ENCODE measurements at regions of chr11 and their contacts with region 1.

Region 1: DNA sequence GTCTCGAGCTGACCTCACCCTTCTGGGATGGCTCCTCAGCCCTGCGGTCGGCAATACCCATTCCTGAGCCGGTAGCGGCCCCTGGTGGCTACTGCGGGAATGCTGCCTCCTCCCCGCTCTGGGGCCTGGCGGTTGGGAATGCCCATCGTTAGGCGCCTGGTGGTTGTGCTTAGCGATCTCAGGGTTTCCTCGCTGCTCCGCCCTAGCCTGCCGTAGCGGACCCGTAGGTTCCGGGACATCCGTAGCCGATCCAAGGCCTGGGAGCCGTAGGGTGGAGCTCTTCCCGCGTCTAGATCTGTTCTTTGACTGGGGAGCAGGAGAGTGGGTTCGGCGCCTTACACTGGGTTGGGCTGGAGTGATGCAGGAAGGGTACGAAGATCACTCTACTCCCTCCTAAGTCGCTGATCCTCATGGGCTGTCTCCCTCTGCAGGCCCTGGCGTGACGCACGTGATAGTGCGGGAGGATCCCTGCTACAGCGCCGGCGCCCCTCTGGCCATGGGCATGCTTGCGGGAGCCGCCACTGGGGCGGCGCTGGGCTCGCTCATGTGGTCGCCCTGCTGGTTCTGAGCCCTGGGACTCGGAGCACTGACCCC is 14.8 kb downstream of the PLEKHB1 start:
- DNase-seq: peak; percentile 77
- ATAC-seq: peak; percentile 98
- H3K4me3 ChIP-seq: peak overlapping the region; percentile 25
- H3K27ac ChIP-seq: peak overlapping the region; percentile 12; the same call in 1 of the 2 replicates
- H3K4me1 ChIP-seq: peaks cover 3% of the 10 kb centered on the region; the same call in 1 of the 2 replicates
- H3K27me3 ChIP-seq: no peaks in the 10 kb centered on the region
- CTCF ChIP-seq: peak; percentile 99
- POLR2A ChIP-seq: peak; percentile 62
- RAD21 ChIP-seq: peak; percentile 100

Region 2: GRCh38 chr11:73350908-73351636 is 310.1 kb before region 1 on chr11:
- CTCF ChIA-PET with region 1: interaction called, 3 read pairs
- POLR2A ChIA-PET with region 1: no interaction called
- dilution Hi-C with region 1: no loop called
- in situ Hi-C with region 1: no loop called
- intact Hi-C with region 1: loop called (anchors 1 kb)
- DNase-seq: peak; percentile 84
- ATAC-seq: peak; percentile 94
- H3K4me3 ChIP-seq: no peak overlapping the region
- H3K27ac ChIP-seq: peak overlapping the region; percentile 63; the same call in 1 of the 2 replicates
- H3K4me1 ChIP-seq: peaks cover 8% of the 10 kb centered on the region; the same call in 1 of the 2 replicates
- H3K27me3 ChIP-seq: no peaks in the 10 kb centered on the region
- CTCF ChIP-seq: peak; percentile 94
- POLR2A ChIP-seq: no peak
- RAD21 ChIP-seq: peak; percentile 74

Region 3: DNA sequence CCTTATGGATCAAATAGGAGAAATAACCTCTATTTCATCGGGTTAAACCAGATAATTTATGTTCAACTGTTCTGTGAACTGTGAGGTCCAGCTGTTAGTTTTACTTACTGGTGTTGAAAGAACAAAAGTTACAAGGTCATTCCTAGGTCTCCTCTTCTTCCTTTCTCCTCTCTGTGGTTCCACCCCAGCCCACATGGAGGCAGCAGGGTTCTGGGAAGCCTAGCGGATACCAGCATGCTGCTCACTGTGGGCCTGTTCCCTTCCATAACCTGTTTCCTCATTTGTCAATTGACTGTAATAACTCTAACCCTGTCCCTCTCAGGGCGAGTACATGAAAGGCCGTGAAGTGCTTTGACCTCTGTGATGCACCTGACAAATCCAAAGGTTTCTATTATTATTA is 257.1 kb before region 1 on chr11:
- CTCF ChIA-PET with region 1: interaction called, 7 read pairs
- POLR2A ChIA-PET with region 1: no interaction called
- dilution Hi-C with region 1: no loop called
- in situ Hi-C with region 1: loop called (anchors 5 kb)
- intact Hi-C with region 1: loop called (anchors 1 kb)
- DNase-seq: peak; percentile 40
- ATAC-seq: peak; percentile 74
- H3K4me3 ChIP-seq: no peak overlapping the region
- H3K27ac ChIP-seq: no peak overlapping the region
- H3K4me1 ChIP-seq: peaks cover 4% of the 10 kb centered on the region; the same call in 1 of the 2 replicates
- H3K27me3 ChIP-seq: no peaks in the 10 kb centered on the region
- CTCF ChIP-seq: peak; percentile 60
- POLR2A ChIP-seq: no peak
- RAD21 ChIP-seq: peak; percentile 76

Region 4: DNA sequence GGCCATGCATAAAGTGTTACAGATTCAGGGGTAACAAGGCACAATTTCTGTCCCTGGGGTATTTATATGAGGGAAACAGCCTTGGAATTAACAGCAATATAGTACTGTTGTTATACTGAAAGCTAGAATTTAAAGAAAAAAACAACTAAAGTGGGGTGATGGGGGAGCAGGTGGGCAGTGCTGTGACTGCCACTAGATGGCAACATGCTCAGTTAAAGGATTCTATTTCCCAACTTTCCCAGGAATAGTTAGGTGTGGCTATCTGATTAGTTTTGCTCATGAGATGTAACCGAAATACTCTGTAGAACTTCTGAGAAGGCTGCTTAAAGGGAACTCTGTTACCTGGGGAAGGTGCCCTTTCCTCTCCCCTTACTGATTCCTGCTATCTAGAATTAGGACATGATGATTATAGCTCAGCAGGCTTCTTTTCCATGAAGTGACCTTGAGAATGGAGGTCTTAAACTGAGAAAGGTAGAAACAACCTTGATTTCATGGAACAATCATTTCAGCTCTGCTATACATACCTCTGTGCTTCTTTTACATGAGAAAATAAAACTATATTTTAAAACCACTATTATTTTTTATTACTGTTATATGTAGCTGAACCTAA is 182.3 kb before region 1 on chr11:
- CTCF ChIA-PET with region 1: interaction called, 9 read pairs
- POLR2A ChIA-PET with region 1: no interaction called
- dilution Hi-C with region 1: no loop called
- in situ Hi-C with region 1: no loop called
- intact Hi-C with region 1: loop called (anchors 1 kb)
- DNase-seq: peak; percentile 42
- ATAC-seq: peak; percentile 89
- H3K4me3 ChIP-seq: no peak overlapping the region
- H3K27ac ChIP-seq: no peak overlapping the region
- H3K4me1 ChIP-seq: peaks cover 3% of the 10 kb centered on the region
- H3K27me3 ChIP-seq: no peaks in the 10 kb centered on the region
- CTCF ChIP-seq: peak; percentile 74
- POLR2A ChIP-seq: no peak
- RAD21 ChIP-seq: peak; percentile 68

Region 5: GRCh38 chr11:73521621-73522020 is 139.5 kb before region 1 on chr11:
- CTCF ChIA-PET with region 1: no interaction called
- POLR2A ChIA-PET with region 1: no interaction called
- dilution Hi-C with region 1: no loop called
- in situ Hi-C with region 1: no loop called
- intact Hi-C with region 1: no loop called
- DNase-seq: peak; percentile 54
- ATAC-seq: peak; percentile 46; the same call in 1 of the 2 replicates
- H3K4me3 ChIP-seq: no peak overlapping the region
- H3K27ac ChIP-seq: no peak overlapping the region
- H3K4me1 ChIP-seq: peaks cover 10% of the 10 kb centered on the region
- H3K27me3 ChIP-seq: no peaks in the 10 kb centered on the region
- CTCF ChIP-seq: no peak
- POLR2A ChIP-seq: no peak
- RAD21 ChIP-seq: no peak

Region 6: GRCh38 chr11:73597956-73598718 is 63.0 kb before region 1 on chr11 and contains the start of gene FAM168A:
- CTCF ChIA-PET with region 1: no interaction called
- POLR2A ChIA-PET with region 1: no interaction called
- dilution Hi-C with region 1: no loop called
- in situ Hi-C with region 1: no loop called
- intact Hi-C with region 1: loop called (anchors 1 kb)
- DNase-seq: peak; percentile 97
- ATAC-seq: peak; percentile 98
- H3K4me3 ChIP-seq: peak within 1 kb of the TSS; percentile 88
- H3K27ac ChIP-seq: peak within 1 kb of the TSS; percentile 96
- H3K4me1 ChIP-seq: peaks cover 6% of the 10 kb centered on the region; the same call in 1 of the 2 replicates
- H3K27me3 ChIP-seq: no peaks in the 10 kb centered on the region
- CTCF ChIP-seq: peak; percentile 16; the same call in 1 of the 2 replicates
- POLR2A ChIP-seq: no peak
- RAD21 ChIP-seq: peak; percentile 25; the same call in 1 of the 2 replicates
- total RNA-seq, gene FAM168A: 13.1 and 13.6 TPM in 2 replicates

Region 7: DNA sequence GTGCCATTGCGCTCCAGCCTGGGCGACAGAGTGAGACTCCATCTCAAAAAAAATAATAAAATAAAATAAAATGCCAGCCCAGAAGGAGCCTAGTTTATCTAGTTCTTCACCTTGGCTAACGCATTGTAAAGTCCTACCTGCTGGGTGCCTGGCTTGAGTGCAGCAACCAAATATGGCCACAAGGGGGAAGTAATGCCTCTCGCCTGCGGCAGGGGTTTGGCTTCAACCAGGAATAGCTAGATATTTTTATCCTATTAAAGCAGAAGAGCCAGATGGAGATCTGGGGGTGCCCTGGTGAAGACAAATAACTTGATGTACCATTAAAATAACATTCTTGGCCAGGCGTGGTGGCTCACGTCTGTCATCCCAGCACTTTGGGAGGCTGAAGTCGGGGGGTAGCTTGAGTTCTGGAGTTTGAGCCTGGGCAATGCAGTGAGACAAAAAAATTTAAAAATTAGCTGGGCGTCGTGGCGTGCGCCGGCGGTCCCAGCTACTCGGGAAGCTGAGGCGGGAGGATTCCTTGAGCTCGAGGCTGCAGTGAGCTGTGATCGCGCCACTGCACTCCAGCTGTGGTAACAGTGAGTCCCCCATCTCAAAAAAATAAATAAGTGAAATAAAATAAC is 35.3 kb before region 1 on chr11:
- CTCF ChIA-PET with region 1: interaction called, 31 read pairs
- POLR2A ChIA-PET with region 1: no interaction called
- dilution Hi-C with region 1: no loop called
- in situ Hi-C with region 1: loop called (anchors 5 kb)
- intact Hi-C with region 1: loop called (anchors 1 kb)
- DNase-seq: peak; percentile 59
- ATAC-seq: peak; percentile 99
- H3K4me3 ChIP-seq: peak overlapping the region; percentile 8; the same call in 1 of the 2 replicates
- H3K27ac ChIP-seq: no peak overlapping the region
- H3K4me1 ChIP-seq: no peaks in the 10 kb centered on the region
- H3K27me3 ChIP-seq: peaks cover 35% of the 10 kb centered on the region
- CTCF ChIP-seq: peak; percentile 86
- POLR2A ChIP-seq: no peak
- RAD21 ChIP-seq: peak; percentile 81

Region 8: DNA sequence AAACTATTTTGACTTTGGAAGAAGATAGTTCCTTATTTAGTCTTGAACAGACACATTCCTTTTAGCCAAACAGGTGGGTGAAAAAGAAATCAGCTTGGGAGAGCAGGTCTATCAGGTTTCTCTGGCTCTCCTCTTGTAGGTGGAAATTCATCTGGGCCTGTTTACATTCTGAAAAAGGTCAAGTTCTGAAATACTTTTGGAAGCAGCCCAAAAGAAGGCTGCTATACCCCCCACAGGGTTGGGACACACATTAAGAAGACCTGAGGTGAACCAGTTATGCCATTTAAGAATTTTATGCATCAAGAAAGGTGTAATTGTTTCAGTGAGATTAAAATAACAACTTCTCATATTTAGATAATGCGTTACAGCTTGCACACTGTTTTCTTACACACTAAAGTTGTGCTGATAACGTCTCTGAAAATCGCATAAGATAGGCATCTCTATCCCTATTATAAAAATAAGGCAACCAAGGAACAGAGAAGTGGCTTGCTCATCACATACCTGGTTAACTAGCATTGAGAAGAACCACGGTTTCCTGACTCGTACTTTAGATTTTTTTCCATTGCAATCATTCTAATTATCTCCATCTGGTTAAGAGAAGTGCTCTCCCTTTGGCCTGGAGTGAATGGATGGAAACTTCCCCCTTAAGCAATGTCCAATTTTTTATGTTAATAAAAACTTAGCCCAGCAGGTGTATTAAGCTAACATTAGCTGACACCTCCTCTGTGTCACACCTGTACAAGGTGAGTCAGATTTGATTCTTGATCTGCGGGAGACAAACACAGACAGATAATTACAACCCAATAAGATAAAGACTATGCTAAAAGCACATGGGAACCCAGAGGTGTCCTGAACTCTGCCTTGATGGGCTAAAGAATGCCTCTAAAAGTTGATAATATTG is 408.3 kb after region 1 on chr11:
- CTCF ChIA-PET with region 1: no interaction called
- POLR2A ChIA-PET with region 1: no interaction called
- dilution Hi-C with region 1: no loop called
- in situ Hi-C with region 1: no loop called
- intact Hi-C with region 1: no loop called
- DNase-seq: peak; percentile 41
- ATAC-seq: no peak
- H3K4me3 ChIP-seq: no peak overlapping the region
- H3K27ac ChIP-seq: no peak overlapping the region
- H3K4me1 ChIP-seq: no peaks in the 10 kb centered on the region; the same call in 1 of the 2 replicates
- H3K27me3 ChIP-seq: no peaks in the 10 kb centered on the region
- CTCF ChIP-seq: no peak
- POLR2A ChIP-seq: no peak
- RAD21 ChIP-seq: no peak

Measured in IMR-90 (cell line).